ENCODE measurements at regions of chr11 and their contacts with region 1.

Region 1: GRCh38 chr11:9748361-9748970 is 84.6 kb downstream of the SWAP70 start:
- DNase-seq: peak; percentile 88
- H3K4me3 ChIP-seq: peak overlapping the region; percentile 26
- H3K27ac ChIP-seq: peak overlapping the region; percentile 96
- H3K4me1 ChIP-seq: peaks cover 75% of the 10 kb centered on the region
- CTCF ChIP-seq: peak; percentile 94

Region 2: GRCh38 chr11:9460322-9461067 is 288.0 kb before region 1 on chr11 and contains the start of gene ZNF143:
- CTCF ChIA-PET with region 1: no interaction called
- POLR2A ChIA-PET with region 1: no interaction called
- intact Hi-C with region 1: loop called (anchors 2 kb)
- DNase-seq: peak; percentile 100
- H3K4me3 ChIP-seq: peak within 1 kb of the TSS; percentile 97
- H3K27ac ChIP-seq: peak within 1 kb of the TSS; percentile 97
- H3K4me1 ChIP-seq: peaks cover 28% of the 10 kb centered on the region
- CTCF ChIP-seq: no peak
- total RNA-seq, gene ZNF143: 25.0 and 36.2 TPM in 2 replicates

Region 3: GRCh38 chr11:9573052-9573774 is 175.3 kb before region 1 on chr11 and contains the start of gene WEE1:
- CTCF ChIA-PET with region 1: no interaction called
- POLR2A ChIA-PET with region 1: interaction called, 7 read pairs
- intact Hi-C with region 1: loop called (anchors 1 kb)
- DNase-seq: peak; percentile 99
- H3K4me3 ChIP-seq: peak within 1 kb of the TSS; percentile 99
- H3K27ac ChIP-seq: peak within 1 kb of the TSS; percentile 78
- H3K4me1 ChIP-seq: peaks cover 54% of the 10 kb centered on the region
- CTCF ChIP-seq: no peak
- total RNA-seq, gene WEE1: 141 and 147 TPM in 2 replicates

Region 4: DNA sequence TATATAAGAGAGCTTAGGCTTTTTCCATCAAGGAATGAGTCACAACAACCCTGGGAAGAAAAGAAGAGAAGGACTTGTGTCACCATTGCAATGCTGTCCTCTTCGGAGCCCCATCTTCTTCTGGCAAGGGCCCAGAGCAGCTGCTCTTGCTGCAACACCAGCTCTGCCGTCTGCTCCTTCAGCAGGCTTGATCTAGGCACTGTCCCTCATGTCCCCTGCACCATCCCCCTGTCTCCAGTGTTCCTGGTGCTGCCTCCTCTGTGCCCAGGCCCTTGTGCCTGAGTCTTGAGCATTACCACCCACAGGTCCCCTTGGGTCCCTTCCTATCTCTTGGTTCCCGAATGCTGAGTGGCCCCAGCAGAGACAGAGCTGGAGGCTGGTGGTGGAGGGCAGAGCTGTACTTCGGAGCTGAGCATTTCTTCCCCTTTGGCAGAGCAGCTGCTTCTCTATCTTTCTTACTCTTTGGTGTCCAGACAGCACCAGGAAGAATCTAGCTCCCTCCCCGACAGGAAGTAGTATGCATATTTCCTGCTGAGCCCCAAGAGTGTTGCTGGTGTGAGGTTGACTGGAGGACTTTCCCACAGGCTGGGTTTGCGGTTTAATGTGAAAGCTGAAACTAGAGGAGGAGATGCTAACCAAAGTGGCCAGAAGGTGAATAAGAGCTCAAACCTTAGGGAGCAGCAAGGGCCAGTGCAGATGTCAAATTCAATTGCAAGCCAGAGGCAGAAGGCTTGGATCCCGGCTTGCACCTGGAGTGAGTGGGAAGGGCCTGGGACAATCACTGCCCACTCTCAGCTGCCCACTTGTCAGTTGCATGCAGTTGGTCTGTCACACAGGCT is 147.2 kb before region 1 on chr11:
- CTCF ChIA-PET with region 1: interaction called, 7 read pairs
- POLR2A ChIA-PET with region 1: interaction called, 30 read pairs
- intact Hi-C with region 1: loop called (anchors 5 kb)
- DNase-seq: peak; percentile 95
- H3K4me3 ChIP-seq: peak overlapping the region; percentile 74
- H3K27ac ChIP-seq: peak overlapping the region; percentile 99
- H3K4me1 ChIP-seq: peaks cover 96% of the 10 kb centered on the region
- CTCF ChIP-seq: no peak

Region 5: GRCh38 chr11:9681583-9682372 is 66.7 kb before region 1 on chr11:
- CTCF ChIA-PET with region 1: interaction called, 3 read pairs
- POLR2A ChIA-PET with region 1: interaction called, 12 read pairs
- intact Hi-C with region 1: no loop called
- DNase-seq: peak; percentile 59
- H3K4me3 ChIP-seq: peak overlapping the region; percentile 30
- H3K27ac ChIP-seq: peak overlapping the region; percentile 81
- H3K4me1 ChIP-seq: peaks cover 96% of the 10 kb centered on the region
- CTCF ChIP-seq: no peak

Region 6: GRCh38 chr11:9716275-9717039 is 32.0 kb before region 1 on chr11:
- CTCF ChIA-PET with region 1: no interaction called
- POLR2A ChIA-PET with region 1: interaction called, 11 read pairs
- intact Hi-C with region 1: no loop called
- DNase-seq: peak; percentile 78
- H3K4me3 ChIP-seq: peak overlapping the region; percentile 3
- H3K27ac ChIP-seq: peak overlapping the region; percentile 41
- H3K4me1 ChIP-seq: peaks cover 54% of the 10 kb centered on the region
- CTCF ChIP-seq: no peak

Measured in OCI-LY7 (cell line).